Uterus (tissue), 4 donors: ENCODE measurements at regions of chr1 and their contacts with region 1.

Region 1: DNA sequence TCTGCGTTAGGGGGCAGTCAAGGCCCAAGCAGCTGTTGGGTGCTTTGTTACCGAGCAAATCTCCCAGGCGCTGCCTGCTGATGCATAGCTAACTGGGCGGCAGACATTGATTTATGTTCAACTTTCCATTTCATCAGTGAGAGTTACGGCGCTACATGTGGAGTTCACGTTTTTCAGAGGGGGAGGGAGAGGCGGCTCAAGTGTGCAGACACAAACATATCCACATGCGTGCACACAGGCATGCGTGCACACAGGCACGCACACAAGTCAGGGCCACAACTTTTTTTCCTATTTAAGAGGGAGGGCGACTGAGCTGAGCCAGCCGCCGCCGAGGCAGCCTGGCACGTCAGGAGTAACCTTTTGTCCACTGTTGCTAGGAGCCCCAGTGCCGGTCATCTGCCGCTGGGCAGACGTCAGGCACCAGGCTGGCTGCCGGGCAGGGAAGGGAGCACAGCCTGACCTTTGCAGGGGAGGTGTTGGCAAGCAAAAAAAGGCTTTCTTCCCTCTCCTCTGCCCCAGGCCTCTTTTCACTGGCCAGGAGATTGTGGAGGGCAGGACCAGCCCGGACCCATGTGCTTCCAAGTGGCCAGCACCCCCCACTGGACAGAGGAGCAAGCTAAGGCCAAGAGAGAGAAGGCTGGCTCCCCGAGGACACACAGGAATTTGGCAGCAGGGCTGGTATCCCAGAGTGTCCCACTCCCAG is 73.3 kb downstream of the MRPL37 start:
- DNase-seq: peak; percentile 90 to 93
- H3K4me3 ChIP-seq: peak overlapping the region in 1 of 2 donors; percentile 6
- H3K27ac ChIP-seq: peak overlapping the region; percentile 85 to 95
- H3K4me1 ChIP-seq: peaks cover 39 to 42% of the 10 kb centered on the region in 2 donors
- H3K27me3 ChIP-seq: no peaks in the 10 kb centered on the region
- CTCF ChIP-seq: peak; percentile 77 to 92 (median 78)
- POLR2A ChIP-seq: no peak

Region 2: DNA sequence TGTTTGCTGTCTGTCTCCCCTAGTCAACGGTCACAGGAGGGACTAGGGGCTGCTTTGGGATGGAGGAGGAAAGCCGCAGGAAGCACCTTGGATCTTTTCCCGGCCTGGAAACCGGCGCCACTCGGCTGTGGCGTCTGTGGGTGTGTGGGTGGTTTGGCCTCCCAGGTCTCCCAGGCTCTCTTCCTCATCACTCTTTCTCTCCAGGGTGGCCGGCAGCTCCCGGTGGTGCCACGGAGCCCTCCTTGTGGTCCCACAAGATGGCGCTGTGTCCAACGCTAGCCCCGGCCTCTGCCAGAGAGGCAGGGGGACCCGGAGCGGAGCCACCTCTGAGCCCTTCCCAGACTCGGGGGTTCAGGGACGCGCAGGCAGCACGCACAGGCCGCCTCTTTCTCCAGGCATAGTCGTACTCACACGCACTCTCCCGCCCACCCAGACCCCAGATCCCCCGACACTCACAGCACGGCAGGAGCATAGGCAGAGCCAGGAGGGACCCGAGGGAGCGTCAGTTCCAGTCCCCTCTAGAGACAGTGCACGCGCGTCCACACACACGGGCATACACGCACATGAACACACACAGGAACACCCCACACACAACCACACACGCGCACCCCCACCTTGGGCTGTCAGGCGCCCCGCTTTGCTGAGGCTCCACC is 151.6 kb before region 1 on chr1:
- intact Hi-C with region 1: loop called (anchors 10 kb)
- DNase-seq: peak; percentile 83 to 89
- H3K4me3 ChIP-seq: peak overlapping the region in 1 of 2 donors; percentile 3
- H3K27ac ChIP-seq: peak overlapping the region; percentile 8 to 22
- H3K4me1 ChIP-seq: no peaks in the 10 kb centered on the region
- H3K27me3 ChIP-seq: no peaks in the 10 kb centered on the region
- CTCF ChIP-seq: peak; percentile 86 to 89 (median 88)
- POLR2A ChIP-seq: no peak

Region 3: DNA sequence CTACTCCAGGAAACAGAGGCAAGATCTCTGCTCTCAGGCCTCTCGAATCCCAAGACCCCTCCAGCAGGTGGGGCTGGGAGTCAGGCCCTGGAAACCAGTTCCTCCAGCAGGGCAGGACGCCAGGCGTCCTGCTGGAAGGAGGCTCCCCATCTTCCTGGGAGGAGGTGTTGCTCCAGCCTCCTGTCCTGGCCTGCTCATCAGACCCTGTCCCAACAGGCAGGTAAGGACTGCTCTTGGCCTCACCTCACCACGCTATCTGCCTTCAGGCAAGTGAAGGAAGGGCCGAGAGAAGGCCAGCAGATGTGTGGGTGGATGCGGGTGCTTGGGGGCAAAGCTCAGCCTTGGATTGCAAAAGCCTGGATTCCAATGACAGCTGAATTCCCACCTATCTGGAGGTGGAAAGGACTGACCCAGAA is 50.1 kb after region 1 on chr1:
- intact Hi-C with region 1: loop called (anchors 10 kb)
- DNase-seq: peak in 1 of 2 donors; percentile 38
- H3K4me3 ChIP-seq: no peak overlapping the region
- H3K27ac ChIP-seq: peak overlapping the region; percentile 83 to 88
- H3K4me1 ChIP-seq: peaks cover 22 to 41% of the 10 kb centered on the region in 2 donors
- H3K27me3 ChIP-seq: no peaks in the 10 kb centered on the region
- CTCF ChIP-seq: peak in 1 of 4 experiments; percentile 11
- POLR2A ChIP-seq: no peak

Region 4: GRCh38 chr1:54406339-54407153 is 133.3 kb after region 1 on chr1 and contains the start of gene SSBP3:
- intact Hi-C with region 1: loop called (anchors 5 kb)
- DNase-seq: peak; percentile 89 to 94
- H3K4me3 ChIP-seq: peak within 1 kb of the TSS; percentile 57 to 97
- H3K27ac ChIP-seq: peak within 1 kb of the TSS; percentile 96 to 98
- H3K4me1 ChIP-seq: peaks cover 9 to 12% of the 10 kb centered on the region in 2 donors
- H3K27me3 ChIP-seq: no peaks in the 10 kb centered on the region
- CTCF ChIP-seq: peak in 3 of 4 experiments; percentile 7 to 56 (median 46)
- POLR2A ChIP-seq: peak; percentile 98
- total RNA-seq, gene SSBP3: 19.7 to 125 (median 31.4) TPM

Region 5: DNA sequence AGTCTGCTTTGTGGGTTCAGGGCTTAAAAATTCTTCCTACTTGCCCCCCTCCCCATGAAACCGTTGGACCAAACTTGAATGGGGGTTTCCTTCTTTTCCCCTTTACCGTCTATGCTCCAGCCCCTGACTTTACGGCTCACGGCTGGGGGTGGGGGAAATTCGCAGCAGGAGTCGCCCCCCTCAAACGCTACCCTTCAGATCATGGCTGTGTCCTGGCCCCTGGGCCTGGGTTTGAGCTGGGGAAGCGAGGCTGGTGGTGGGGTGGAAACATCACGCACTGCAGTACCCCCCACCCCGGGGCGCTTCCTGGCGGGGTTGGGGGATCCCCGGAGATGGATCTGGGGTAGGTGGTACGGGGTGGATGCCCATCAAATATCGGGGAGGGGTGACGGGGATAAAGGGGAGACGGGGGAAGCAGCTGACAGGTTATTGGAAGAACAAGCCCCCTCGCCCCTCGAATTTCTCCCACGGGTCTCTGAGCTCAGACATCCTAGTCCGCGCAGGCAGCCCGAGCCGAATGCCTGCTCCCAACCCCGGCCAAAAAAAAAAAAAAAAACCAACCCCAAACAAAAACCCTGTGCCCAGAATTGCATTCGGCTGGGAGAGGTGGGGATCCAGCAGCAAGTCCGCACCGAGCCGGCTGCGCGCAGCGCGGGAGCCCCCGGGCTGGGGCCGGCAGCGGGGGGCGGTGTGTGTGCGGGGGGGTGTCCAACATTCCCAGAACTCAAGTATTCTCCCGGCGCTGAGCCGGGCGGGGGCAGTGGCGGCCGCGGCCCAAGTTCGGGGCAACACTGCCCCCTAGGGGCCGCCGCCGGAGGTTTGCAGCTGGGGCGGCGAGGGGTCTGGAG is 215.8 kb after region 1 on chr1:
- intact Hi-C with region 1: loop called (anchors 5 kb)
- DNase-seq: peak; percentile 88 to 89
- H3K4me3 ChIP-seq: peak overlapping the region; percentile 57 to 60
- H3K27ac ChIP-seq: peak overlapping the region; percentile 95 to 98
- H3K4me1 ChIP-seq: peaks cover 0 to 10% of the 10 kb centered on the region in 2 donors
- H3K27me3 ChIP-seq: no peaks in the 10 kb centered on the region
- CTCF ChIP-seq: peak; percentile 95 to 99 (median 98)
- POLR2A ChIP-seq: peak in 1 of 2 donors; percentile 34